ENCODE measurements at regions of chr9 and their contacts with region 1.

Region 1: DNA sequence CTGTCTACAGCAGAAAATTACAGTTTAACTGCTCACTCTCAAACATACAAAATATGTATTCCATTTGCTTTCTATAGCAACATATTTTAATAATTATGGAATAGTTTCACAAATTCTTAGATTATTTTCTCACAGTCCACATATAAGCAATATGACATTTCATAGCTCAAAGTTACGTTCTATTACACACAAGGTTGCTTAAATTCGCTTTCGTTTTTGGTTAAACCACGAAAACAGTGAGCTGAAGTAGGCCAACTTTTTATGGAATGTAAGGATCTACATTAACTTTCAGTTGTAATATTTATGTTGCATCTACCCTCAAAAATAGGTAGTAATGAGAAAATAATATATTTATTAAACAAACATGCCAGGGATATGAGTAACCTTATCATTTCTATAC is 966.0 kb upstream of the ACO1 start:
- DNase-seq: no peak
- H3K4me3 ChIP-seq: no peak overlapping the region
- H3K27ac ChIP-seq: no peak overlapping the region
- H3K4me1 ChIP-seq: no peaks in the 10 kb centered on the region
- H3K27me3 ChIP-seq: no peaks in the 10 kb centered on the region
- CTCF ChIP-seq: no peak
- POLR2A ChIP-seq: no peak

Region 2: GRCh38 chr9:30065883-30066282 is 1352.5 kb before region 1 on chr9:
- CTCF ChIA-PET with region 1: no interaction called
- POLR2A ChIA-PET with region 1: no interaction called
- dilution Hi-C with region 1: no loop called
- intact Hi-C with region 1: no loop called
- DNase-seq: no peak
- H3K4me3 ChIP-seq: no peak overlapping the region
- H3K27ac ChIP-seq: no peak overlapping the region
- H3K4me1 ChIP-seq: no peaks in the 10 kb centered on the region
- H3K27me3 ChIP-seq: no peaks in the 10 kb centered on the region
- CTCF ChIP-seq: no peak
- POLR2A ChIP-seq: no peak

Region 3: DNA sequence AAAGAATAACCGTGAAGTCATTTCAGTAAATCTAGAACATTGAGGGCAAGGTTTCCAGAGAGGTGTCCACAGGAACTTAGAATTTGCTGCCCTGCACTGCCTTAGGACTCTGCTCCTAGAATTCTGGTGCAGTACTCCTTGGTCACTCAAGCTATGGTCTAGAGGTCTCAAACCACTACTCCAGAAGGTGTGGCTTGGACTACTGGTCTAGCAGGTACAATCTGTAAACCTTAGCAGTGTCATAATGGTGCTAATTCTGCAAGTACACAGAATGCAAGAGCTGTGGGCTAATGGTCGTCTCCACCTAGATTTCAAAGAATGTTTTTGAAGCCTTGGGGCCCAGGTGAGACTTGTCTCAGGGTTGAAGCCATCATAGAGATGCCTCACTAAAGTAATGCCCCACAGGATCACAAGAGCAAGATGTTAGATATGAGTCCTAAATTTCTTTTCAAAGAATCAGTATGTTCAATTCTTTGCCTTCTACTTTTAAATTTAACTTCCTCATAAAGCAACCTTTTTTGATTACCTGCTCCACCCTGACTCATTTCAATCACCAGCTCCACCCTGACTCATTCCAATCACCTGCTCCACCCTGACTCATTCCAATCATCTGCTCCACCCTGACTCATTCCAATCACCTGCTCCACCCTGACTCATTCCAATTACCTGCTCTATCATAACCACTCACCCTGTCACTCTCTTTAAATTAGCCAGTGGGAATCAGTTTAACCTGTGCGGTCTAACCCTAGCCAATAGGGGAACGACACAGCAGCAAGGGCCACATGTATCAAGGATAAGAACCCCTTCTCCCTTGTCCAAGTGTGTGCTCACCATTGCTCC is 145.7 kb before region 1 on chr9:
- CTCF ChIA-PET with region 1: no interaction called
- POLR2A ChIA-PET with region 1: no interaction called
- dilution Hi-C with region 1: no loop called
- intact Hi-C with region 1: loop called (anchors 10 kb)
- DNase-seq: no peak
- H3K4me3 ChIP-seq: no peak overlapping the region
- H3K27ac ChIP-seq: no peak overlapping the region
- H3K4me1 ChIP-seq: no peaks in the 10 kb centered on the region
- H3K27me3 ChIP-seq: no peaks in the 10 kb centered on the region
- CTCF ChIP-seq: no peak
- POLR2A ChIP-seq: no peak

Region 4: DNA sequence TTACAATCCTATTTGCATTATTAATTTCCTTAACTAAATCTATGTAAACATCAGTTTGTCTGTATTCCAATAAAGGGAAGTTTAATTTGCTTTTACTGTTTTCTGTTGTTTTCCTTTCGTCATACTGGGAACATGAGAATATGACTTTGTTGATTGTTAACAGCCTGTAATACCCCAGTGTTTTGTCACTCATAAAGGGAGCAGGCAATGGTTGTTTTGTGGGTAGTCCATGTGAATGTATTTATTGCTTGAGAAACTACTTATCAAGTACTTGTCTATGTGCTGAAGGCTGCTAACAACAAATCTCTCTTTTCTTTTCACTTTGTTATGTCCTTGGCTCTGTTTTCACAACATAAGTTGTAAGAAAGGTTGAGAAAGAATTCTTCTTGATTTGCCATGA is 104.2 kb before region 1 on chr9:
- CTCF ChIA-PET with region 1: no interaction called
- POLR2A ChIA-PET with region 1: no interaction called
- dilution Hi-C with region 1: no loop called
- intact Hi-C with region 1: loop called (anchors 10 kb)
- DNase-seq: no peak
- H3K4me3 ChIP-seq: no peak overlapping the region
- H3K27ac ChIP-seq: no peak overlapping the region
- H3K4me1 ChIP-seq: peaks cover 3% of the 10 kb centered on the region
- H3K27me3 ChIP-seq: no peaks in the 10 kb centered on the region
- CTCF ChIP-seq: no peak
- POLR2A ChIP-seq: no peak

Measured in endothelial cell of umbilical vein (primary cell).